B cell (primary cell): ENCODE measurements at regions of chr19 and their contacts with region 1.

Region 1: DNA sequence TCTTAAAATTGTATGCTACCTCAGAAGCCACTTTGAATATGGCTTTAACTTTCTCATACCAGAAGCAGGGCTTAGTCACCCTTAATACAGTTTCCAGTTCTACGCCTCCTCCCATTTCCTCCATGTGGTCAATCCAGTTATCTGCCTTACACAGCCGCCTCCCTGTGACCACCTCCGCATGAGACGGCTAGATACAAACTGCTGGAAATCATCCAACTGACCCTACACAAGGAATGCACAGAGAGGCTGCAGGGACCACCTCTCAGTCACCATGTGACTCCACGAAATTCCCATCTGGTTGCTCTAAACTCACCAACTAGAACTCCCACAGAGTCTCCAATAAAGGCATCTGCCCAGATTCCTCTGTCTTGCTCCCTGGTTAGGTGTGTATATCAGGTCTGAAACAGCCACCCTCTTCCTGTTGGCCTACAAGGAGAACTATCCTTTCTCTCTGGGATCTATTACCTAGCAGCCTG is 6.8 kb downstream of the ZNF564 start:
- DNase-seq: no peak
- ATAC-seq: no peak
- H3K4me3 ChIP-seq: no peak overlapping the region
- H3K4me3 Mint-ChIP-seq: no peak overlapping the region
- H3K27ac ChIP-seq: peak overlapping the region in 1 of 2 donors; percentile 40
- H3K27ac Mint-ChIP-seq: peak overlapping the region; percentile 34
- H3K4me1 ChIP-seq: peaks cover 3 to 10% of the 10 kb centered on the region in 2 donors
- H3K4me1 Mint-ChIP-seq: peaks cover 45% of the 10 kb centered on the region
- H3K27me3 ChIP-seq: no peaks in the 10 kb centered on the region
- H3K27me3 Mint-ChIP-seq: no peaks in the 10 kb centered on the region
- CTCF ChIP-seq: no peak

Region 2: DNA sequence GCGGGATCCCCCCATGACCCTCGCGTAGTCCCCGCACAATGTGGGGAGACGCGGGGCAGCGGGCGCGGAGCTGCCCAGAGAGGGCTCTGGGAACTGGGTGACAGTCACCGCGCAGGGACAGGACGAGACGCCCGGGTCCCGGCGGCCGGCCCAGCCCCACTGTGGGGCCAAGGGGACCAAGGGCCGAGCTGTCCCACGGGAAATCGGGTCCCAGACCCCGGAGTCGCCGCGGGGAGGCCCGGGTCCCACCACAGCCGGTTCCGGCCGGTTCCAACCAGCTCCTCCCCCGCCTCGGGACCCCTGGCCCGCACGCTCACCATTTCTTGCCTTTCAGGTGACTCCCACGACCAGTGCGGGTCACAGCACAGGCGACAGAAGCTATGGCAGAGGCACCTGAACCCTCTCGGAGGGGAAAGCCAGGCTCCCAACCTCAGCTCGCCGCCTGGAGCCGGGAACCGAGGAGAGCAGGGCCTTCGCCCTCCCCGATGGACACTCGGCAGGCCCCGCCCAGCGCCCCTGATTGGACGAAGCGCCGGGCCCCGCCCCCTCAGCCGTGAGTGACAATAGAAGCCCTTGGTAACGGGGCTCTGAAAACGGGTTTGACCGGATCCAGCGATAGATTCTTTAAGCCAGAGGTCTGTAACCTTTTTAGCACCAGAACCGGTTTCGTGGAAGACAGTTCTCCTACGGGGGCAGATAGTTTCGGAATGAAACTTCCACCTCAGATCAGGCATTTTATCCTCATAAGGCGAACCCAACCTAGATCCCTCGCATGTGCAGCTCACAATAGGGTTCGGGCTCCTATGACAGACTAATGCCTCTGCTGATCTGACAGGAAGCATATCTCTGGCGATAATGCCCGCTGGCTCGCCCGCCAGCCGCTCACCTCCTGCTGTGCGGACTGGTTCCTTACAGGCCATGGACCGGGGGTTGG is 509.0 kb before region 1 on chr19 and contains the start of gene ZNF433:
- CTCF ChIA-PET with region 1: no interaction called
- POLR2A ChIA-PET with region 1: interaction called, 10 read pairs
- intact Hi-C with region 1: no loop called
- DNase-seq: peak; percentile 78
- ATAC-seq: peak; percentile 97
- H3K4me3 ChIP-seq: peak within 1 kb of the TSS; percentile 60 to 88 (median 73)
- H3K4me3 Mint-ChIP-seq: peak within 1 kb of the TSS; percentile 95
- H3K27ac ChIP-seq: peak within 1 kb of the TSS in 1 of 2 donors; percentile 59
- H3K27ac Mint-ChIP-seq: peak within 1 kb of the TSS; percentile 86
- H3K4me1 ChIP-seq: peaks cover 3 to 13% of the 10 kb centered on the region in 2 donors
- H3K4me1 Mint-ChIP-seq: peaks cover 19% of the 10 kb centered on the region
- H3K27me3 ChIP-seq: no peaks in the 10 kb centered on the region
- H3K27me3 Mint-ChIP-seq: no peaks in the 10 kb centered on the region
- CTCF ChIP-seq: no peak
- total RNA-seq, gene ZNF433: 7.3 and 7.6 TPM in 2 replicates

Region 3: GRCh38 chr19:12425236-12425887 is 119.1 kb before region 1 on chr19:
- CTCF ChIA-PET with region 1: no interaction called
- POLR2A ChIA-PET with region 1: no interaction called
- intact Hi-C with region 1: no loop called
- DNase-seq: no peak
- ATAC-seq: no peak
- H3K4me3 ChIP-seq: no peak overlapping the region
- H3K4me3 Mint-ChIP-seq: no peak overlapping the region
- H3K27ac ChIP-seq: no peak overlapping the region
- H3K27ac Mint-ChIP-seq: no peak overlapping the region
- H3K4me1 ChIP-seq: no peaks in the 10 kb centered on the region
- H3K4me1 Mint-ChIP-seq: peaks cover 2% of the 10 kb centered on the region
- H3K27me3 ChIP-seq: no peaks in the 10 kb centered on the region
- H3K27me3 Mint-ChIP-seq: no peaks in the 10 kb centered on the region
- CTCF ChIP-seq: no peak